ENCODE measurements at regions of chr1 and their contacts with region 1.

Region 1: DNA sequence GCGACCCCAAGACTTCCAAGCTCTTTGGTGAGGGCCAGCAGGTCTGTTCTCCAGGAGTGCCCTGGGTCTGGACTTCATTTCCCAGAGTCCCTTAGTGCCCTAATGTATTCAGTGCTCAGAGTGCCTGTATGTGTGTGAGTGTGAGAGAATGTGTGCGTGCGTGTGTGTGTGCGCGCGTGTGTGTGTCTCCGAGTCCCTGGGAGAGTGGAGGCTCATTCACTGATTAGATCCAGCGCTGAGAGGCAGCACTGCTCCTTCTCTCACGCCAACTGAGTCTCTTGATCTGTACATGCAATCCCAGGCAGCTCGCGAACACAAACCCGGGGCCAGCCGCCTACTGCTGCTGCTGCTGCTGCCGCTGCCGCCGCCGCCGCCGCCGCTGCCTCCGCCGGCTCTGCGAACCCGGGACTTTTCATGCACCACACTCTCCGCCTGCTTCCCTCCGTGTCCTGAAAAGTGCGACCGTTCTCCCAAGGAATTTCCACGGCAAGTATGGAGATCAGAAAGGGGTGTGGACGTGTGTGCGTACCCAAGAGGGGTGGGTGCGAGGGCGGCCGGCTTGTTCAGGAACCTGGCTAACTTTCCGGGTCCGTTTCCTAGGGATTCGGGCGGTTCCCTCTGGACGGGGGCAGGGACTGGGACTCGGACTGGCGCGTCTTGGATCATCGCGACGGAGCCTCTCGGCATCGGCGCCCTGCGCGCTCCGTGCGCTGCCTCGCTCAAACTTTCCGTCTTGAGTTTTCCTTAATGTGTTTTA is at the start of gene RNF220:
- DNase-seq: peak; percentile 75
- H3K4me3 ChIP-seq: peak within 1 kb of the TSS; percentile 33 to 52 (median 39)
- H3K27ac ChIP-seq: no peak within 1 kb of the TSS
- H3K4me1 ChIP-seq: peaks cover 25% of the 10 kb centered on the region
- H3K27me3 ChIP-seq: peaks cover 44 to 56% of the 10 kb centered on the region in 2 experiments
- CTCF ChIP-seq: no peak
- POLR2A ChIP-seq: no peak
- total RNA-seq, gene RNF220: 62.7 and 72.6 TPM in 2 replicates

Region 2: GRCh38 chr1:44327679-44328491 is 77.3 kb before region 1 on chr1:
- CTCF ChIA-PET with region 1: no interaction called
- POLR2A ChIA-PET with region 1: no interaction called
- dilution Hi-C with region 1: no loop called
- intact Hi-C with region 1: no loop called
- DNase-seq: peak; percentile 60
- H3K4me3 ChIP-seq: no peak overlapping the region
- H3K27ac ChIP-seq: peak overlapping the region; percentile 48
- H3K4me1 ChIP-seq: peaks cover 7% of the 10 kb centered on the region
- H3K27me3 ChIP-seq: no peaks in the 10 kb centered on the region
- CTCF ChIP-seq: no peak
- POLR2A ChIP-seq: no peak

Region 3: GRCh38 chr1:44354840-44355581 is 50.2 kb before region 1 on chr1 and contains the start of gene ERI3:
- CTCF ChIA-PET with region 1: no interaction called
- POLR2A ChIA-PET with region 1: no interaction called
- dilution Hi-C with region 1: no loop called
- intact Hi-C with region 1: loop called (anchors 2 kb)
- DNase-seq: peak; percentile 99
- H3K4me3 ChIP-seq: peak within 1 kb of the TSS; percentile 77 to 86 (median 78)
- H3K27ac ChIP-seq: peak within 1 kb of the TSS; percentile 34
- H3K4me1 ChIP-seq: peaks cover 11% of the 10 kb centered on the region
- H3K27me3 ChIP-seq: no peaks in the 10 kb centered on the region
- CTCF ChIP-seq: no peak
- POLR2A ChIP-seq: no peak
- total RNA-seq, gene ERI3: 45.3 and 53.5 TPM in 2 replicates

Region 4: DNA sequence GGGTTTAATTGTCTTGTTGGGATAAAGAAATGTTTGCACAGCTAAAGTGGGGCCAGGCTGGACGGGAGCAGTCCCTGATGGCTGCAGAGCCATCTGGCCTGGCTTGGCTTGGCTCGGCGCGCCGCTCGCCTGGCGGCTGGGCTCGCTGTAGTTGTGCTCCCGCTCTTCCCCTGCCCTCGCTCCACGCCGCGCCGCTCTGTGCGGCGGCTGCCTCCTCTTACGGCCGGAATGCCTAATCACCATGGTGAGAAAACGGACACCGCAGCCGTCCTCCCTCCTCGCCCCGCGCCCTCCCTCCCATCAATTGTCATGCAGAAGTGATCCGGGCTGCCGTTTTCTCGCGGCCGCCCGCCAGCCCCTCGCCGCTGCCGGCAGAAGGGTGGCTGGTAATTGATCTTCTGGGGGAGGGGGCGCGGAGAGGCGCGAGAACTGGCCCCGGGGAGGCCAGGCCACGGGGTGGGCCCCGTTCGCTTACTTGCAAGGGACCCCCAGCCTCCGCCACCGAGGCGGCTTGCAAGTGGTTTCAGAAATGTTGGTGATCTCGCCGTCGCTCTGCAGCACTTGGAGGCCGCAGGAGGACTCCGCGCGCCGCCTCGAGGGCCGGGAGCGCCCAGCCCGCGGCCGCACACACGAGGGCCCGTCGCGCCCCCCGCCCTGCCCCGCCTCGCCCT is 12.3 kb after region 1 on chr1:
- CTCF ChIA-PET with region 1: interaction called, 7 read pairs
- POLR2A ChIA-PET with region 1: no interaction called
- dilution Hi-C with region 1: no loop called
- intact Hi-C with region 1: loop called (anchors 1 kb)
- DNase-seq: peak; percentile 36
- H3K4me3 ChIP-seq: peak overlapping the region in 1 of 3 experiments; percentile 25
- H3K27ac ChIP-seq: no peak overlapping the region
- H3K4me1 ChIP-seq: peaks cover 13% of the 10 kb centered on the region
- H3K27me3 ChIP-seq: peaks cover 59 to 72% of the 10 kb centered on the region in 2 experiments
- CTCF ChIP-seq: no peak
- POLR2A ChIP-seq: no peak

Region 5: DNA sequence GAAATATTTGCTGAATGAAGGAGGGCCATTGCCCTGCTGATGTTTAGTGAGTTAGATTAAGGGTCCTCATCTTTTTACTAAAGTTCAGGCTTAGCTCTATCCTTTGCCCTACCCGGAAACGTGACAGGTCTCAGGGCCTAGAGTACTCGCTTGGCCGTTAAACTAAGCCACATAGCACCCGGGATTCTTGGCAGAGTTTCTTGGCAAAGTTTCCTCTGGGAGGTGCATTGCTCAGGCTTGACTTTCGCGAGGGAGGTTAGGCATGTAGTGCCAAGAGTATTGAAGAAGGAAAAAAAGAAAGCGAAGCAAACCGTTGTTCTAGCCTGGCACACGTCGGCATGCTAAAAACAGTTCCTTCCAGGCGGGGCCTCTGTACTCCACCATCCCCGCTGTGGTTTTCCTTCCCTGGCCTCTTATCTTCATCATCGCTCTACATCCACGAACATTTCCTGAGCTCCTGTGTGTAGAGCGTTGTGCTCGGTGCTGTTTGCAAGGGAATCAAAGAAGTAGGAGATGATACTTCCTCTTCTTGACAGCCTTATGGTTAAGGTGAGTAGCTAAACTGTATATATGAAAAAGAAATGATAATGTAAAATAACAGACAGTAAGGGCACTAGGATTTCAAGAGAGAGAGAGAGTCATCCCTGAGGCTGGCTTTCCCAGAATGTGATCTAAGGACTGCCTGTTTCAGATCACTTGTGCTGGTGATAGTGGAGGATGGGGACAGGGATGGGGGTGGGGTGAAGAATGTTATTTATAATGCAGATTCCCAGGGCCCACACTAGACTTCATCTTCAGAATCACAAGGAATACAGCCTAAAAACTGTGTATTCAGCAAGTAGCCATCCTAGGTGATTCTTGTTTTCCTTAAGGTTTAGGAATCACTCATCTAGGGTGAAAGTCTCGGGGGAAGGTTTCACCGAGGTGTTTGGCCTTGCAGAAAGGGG is 18.6 kb after region 1 on chr1:
- CTCF ChIA-PET with region 1: interaction called, 7 read pairs
- POLR2A ChIA-PET with region 1: no interaction called
- dilution Hi-C with region 1: no loop called
- intact Hi-C with region 1: loop called (anchors 1 kb)
- DNase-seq: peak; percentile 50
- H3K4me3 ChIP-seq: no peak overlapping the region
- H3K27ac ChIP-seq: no peak overlapping the region
- H3K4me1 ChIP-seq: peaks cover 32% of the 10 kb centered on the region
- H3K27me3 ChIP-seq: peaks cover 25% of the 10 kb centered on the region in 2 experiments
- CTCF ChIP-seq: no peak
- POLR2A ChIP-seq: no peak

Region 6: GRCh38 chr1:44500181-44501046 is 95.2 kb after region 1 on chr1:
- CTCF ChIA-PET with region 1: interaction called, 3 read pairs
- POLR2A ChIA-PET with region 1: no interaction called
- dilution Hi-C with region 1: no loop called
- intact Hi-C with region 1: loop called (anchors 1 kb)
- DNase-seq: peak; percentile 59
- H3K4me3 ChIP-seq: no peak overlapping the region
- H3K27ac ChIP-seq: no peak overlapping the region
- H3K4me1 ChIP-seq: no peaks in the 10 kb centered on the region
- H3K27me3 ChIP-seq: peaks cover 26 to 29% of the 10 kb centered on the region in 2 experiments
- CTCF ChIP-seq: peak in 1 of 2 donors; percentile 48
- POLR2A ChIP-seq: no peak

Measured in endothelial cell of umbilical vein (primary cell).